ENCODE measurements at regions of chr12 and their contacts with region 1.

Region 1: GRCh38 chr12:3073438-3074250 is 3.5 kb upstream of the TSPAN9 start:
- DNase-seq: peak; percentile 93
- ATAC-seq: peak; percentile 67

Region 2: DNA sequence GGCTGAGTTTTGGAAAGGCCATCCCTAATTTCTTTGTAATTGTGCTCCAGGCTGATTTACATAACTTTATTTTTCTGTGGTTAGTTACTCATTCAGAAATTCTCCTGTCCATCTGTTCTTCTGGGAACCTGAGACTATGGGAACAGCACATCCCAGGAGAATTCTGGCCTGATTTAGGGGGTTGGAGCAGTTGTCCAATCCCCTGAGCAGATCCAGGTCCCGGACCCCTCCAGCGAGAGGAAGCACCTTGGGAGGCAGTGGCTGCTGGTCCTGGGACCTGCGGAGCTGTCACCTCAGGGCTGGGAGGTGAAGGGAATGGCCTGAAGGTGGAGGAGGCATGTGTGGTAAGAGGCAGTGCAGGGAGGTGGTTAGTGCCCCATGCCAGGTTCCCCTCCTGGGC is 44.0 kb after region 1 on chr12:
- intact Hi-C with region 1: no loop called
- DNase-seq: no peak
- ATAC-seq: no peak

Region 3: GRCh38 chr12:3129301-3130056 is 55.8 kb after region 1 on chr12:
- intact Hi-C with region 1: loop called (anchors 5 kb)
- DNase-seq: no peak
- ATAC-seq: no peak

Region 4: DNA sequence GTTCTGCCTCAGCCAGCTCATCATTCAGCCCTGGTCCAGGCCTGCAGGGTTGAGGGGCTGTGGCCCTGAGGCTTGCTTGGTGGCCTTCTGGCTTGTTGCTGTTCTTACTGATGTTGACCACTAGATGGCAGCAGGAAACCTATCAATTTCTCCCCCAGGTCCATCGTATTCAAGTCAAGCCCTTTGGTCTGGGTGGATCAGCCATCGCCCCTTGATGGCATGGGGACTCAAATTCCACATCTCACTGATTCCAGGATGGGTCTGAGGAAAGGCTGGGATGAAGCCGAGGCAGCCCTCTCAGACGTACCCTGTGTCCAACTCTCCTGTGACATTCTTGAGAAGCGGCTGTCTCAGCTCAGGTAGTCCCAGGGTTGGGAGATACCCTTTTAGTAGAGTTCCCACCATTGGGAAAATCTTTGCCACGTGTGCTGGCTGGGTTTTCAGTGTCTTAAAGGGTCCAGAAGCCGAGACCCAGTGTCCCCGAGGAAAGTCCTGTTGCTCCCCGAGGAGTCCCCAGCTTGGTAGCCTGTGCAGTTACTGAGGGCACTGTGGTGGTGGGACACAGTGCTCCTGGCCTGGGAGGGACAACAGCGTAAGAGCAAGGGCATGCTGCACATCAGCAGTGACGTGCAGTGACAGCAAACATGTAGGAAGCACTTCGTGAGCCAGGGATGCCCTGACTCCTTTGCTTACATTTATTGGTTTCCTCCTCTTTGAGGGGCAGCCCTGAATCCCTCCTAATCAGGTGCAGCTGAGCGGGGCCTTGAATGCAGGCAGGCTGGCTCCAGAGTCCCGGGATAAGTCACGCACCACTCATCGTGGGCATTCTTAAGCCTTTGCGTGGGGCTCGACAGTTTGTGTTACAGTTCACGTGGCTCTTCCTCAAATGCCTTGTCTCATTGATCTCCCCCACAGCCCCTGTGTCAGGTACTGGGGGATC is 62.1 kb after region 1 on chr12:
- intact Hi-C with region 1: loop called (anchors 5 kb)
- DNase-seq: no peak
- ATAC-seq: peak; percentile 81

Region 5: GRCh38 chr12:3202734-3203446 is 129.2 kb after region 1 on chr12:
- intact Hi-C with region 1: loop called (anchors 5 kb)
- DNase-seq: peak; percentile 81
- ATAC-seq: peak; percentile 62

Region 6: DNA sequence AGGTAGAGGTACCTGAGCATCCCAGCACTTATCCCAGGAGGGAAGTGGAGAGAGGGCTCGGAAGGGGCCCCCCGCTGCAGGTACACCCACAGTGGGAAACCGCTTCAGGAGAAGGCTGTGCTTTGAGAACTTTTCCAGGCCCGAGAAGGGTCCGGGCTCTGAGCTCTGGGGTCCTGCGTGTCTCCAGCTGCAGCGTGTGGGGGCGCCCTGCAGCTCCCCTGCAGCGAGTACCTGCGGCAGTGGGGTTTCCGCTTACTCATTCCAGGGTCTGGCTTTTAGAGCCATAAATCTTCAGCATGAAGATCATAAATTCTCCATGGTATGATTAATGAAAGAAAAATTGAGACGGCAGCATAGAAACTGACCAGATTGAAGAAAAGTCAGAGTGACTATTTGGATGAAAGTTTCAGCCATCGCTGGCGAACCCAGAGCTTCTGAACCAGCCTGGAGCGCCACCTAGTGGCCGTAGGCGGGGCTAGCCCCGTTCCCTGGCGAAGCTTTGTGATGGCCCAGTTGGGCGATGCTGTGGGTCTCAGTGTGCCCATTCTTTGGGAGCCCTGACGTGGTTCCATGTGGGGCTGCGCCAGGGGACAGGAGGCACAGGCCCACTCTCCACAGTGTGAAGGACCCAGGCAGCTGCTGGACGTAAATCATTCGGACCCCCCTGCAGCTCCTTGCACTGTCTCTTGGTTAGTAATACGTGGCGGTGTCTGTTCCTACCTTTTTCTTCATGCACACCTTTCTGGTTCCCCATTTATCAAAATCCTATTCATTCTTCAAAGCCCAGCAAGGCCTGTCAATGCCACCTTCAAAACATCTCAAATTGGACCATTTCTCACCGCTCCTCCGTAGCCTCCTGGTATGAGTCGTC is 201.8 kb after region 1 on chr12:
- intact Hi-C with region 1: loop called (anchors 5 kb)
- DNase-seq: peak; percentile 90
- ATAC-seq: peak; percentile 77

Measured in sciatic nerve (tissue), 2 donors.